ENCODE measurements at regions of chr1 and their contacts with region 1.

Region 1: GRCh38 chr1:194289569-194290266 is 1103.3 kb upstream of the B3GALT2 start:
- H3K4me3 Mint-ChIP-seq: no peak overlapping the region
- H3K27ac Mint-ChIP-seq: no peak overlapping the region
- H3K4me1 Mint-ChIP-seq: no peaks in the 10 kb centered on the region
- H3K27me3 Mint-ChIP-seq: no peaks in the 10 kb centered on the region

Region 2: DNA sequence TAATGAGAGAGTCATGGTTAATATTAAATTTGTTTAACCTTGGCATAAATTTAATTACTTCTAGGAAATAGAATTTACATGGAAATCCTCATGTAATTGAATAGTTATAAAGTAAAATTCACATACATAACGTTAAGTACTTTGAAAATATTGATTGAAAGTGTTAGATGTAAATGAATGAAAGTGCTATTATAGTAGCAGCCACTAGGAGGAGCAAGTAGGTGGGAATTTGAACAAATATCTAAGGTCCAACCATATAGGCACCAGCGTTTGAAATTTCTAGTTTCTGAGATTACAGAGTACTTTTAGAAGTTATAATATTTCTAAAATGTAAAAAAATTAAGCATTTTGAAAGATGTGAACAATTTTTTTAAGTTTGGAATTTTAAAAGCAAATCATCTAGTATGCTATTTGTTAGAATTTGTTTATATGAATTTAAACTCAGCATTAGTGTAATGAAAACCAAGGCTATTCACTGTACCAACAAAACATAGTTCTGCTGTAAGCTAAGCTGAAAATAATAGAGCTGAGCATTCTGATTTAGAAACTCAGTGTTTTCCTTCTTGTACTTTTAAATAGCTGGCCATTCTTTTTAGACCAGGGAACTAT is 1106.6 kb before region 1 on chr1:
- intact Hi-C with region 1: loop called (anchors 5 kb)
- H3K4me3 Mint-ChIP-seq: no peak overlapping the region
- H3K27ac Mint-ChIP-seq: no peak overlapping the region
- H3K4me1 Mint-ChIP-seq: peaks cover 15% of the 10 kb centered on the region
- H3K27me3 Mint-ChIP-seq: no peaks in the 10 kb centered on the region

Region 3: DNA sequence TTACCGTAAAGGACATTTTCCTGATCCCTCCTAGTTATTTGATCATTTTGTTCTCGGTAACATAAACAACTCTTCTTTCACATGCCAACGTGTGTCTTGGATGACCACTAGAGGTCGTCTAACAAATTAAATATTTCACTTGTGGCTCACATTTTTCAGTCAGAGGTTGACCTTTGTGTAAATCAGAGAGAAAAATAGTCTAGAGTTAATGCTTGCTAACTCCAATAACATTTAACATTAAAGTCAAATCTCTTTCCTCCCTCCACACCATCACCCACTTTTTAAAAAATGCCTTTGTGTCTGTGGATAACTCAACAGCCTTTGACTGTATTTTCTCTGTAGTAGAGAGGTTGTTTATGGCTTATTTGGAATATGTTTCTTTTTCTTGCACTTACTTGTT is 882.8 kb before region 1 on chr1:
- intact Hi-C with region 1: loop called (anchors 5 kb)
- H3K4me3 Mint-ChIP-seq: no peak overlapping the region
- H3K27ac Mint-ChIP-seq: no peak overlapping the region
- H3K4me1 Mint-ChIP-seq: peaks cover 6% of the 10 kb centered on the region
- H3K27me3 Mint-ChIP-seq: no peaks in the 10 kb centered on the region